ENCODE measurements at regions of chr2 and their contacts with region 1.

Region 1: DNA sequence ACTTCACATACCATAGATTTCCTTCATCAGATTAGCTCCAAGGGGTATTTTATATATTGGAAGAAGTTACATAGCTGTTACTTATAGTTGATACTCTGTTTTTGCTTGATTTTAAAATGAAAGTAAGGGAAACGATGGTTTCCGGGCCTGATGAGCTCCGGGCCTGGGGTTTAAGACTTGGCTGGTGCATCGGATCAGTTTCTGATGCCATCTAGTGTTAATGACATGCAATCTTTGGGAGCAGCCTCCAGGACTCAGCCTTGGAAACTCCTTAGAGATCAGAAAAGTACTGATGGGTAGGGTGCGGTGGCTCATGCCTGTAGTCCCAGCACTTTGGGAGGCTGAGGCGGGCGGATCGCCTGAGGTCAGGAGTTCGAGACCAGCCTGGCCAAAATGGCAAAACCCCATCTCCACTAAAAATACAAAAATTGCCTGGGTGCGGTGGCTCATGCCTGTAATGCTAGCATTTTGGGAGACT is 47.1 kb upstream of the CNOT11 start:
- DNase-seq: peak; percentile 82
- H3K4me3 Mint-ChIP-seq: peak overlapping the region; percentile 72
- H3K27ac Mint-ChIP-seq: peak overlapping the region; percentile 43
- H3K4me1 Mint-ChIP-seq: peaks cover 12% of the 10 kb centered on the region
- H3K27me3 Mint-ChIP-seq: peaks cover 5% of the 10 kb centered on the region

Region 2: DNA sequence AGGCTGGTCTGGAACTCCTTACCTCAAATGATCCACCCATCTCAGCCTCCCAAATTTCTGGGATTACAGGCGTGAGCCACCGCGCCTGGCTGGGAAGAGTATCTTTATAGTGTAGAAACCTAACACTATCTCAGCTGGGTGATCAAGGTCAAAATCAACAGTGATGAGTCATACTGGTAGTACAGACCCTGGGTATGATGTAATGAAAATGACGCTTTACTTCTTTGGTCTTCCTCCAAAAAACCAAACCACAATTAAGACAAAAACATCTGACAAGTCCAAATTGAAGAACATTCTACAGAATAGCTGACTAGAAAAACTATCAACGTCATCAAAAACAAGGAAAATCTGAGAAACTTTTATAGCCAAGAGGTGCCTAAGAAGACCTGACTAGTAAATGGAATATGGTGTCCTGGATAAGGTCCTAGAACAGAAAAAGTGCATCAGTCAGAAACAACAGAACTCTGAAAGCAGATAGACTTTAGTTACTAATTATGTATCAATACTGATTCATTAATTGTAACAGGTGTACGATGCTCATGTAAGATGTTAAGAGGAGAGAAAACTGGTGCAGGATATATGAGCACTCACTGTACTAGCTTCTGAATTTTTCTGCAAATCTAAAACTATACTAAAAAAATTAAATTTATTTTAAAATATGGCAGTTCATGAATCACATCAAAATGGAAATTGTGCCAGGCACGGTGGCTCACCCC is 617.3 kb before region 1 on chr2:
- intact Hi-C with region 1: loop called (anchors 10 kb)
- DNase-seq: peak; percentile 85
- H3K4me3 Mint-ChIP-seq: peak overlapping the region; percentile 32
- H3K27ac Mint-ChIP-seq: peak overlapping the region; percentile 67
- H3K4me1 Mint-ChIP-seq: peaks cover 39% of the 10 kb centered on the region
- H3K27me3 Mint-ChIP-seq: peaks cover 5% of the 10 kb centered on the region

Region 3: DNA sequence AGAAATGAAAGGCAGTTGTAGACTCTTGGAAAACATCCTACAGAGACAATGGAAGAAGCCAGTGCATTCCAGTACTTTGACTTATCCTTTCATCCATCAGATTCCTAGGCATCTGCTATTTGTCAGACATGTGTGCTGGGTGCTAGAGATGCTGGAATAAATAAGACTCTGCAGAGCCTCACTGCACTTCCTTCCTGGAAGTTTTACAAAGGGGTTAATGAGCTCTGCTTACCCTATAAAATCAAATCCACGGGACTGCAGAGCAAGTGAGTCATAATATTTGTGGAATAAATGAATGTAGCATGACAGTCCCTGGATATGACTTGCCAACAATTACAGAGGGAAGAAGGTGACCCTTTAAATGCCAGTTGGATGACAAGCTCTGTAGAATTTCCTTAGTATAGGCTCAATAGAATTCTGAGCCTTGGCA is 438.3 kb before region 1 on chr2:
- intact Hi-C with region 1: no loop called
- DNase-seq: no peak
- H3K4me3 Mint-ChIP-seq: no peak overlapping the region
- H3K27ac Mint-ChIP-seq: no peak overlapping the region
- H3K4me1 Mint-ChIP-seq: no peaks in the 10 kb centered on the region
- H3K27me3 Mint-ChIP-seq: peaks cover 7% of the 10 kb centered on the region

Region 4: GRCh38 chr2:101012706-101013181 is 192.8 kb before region 1 on chr2:
- intact Hi-C with region 1: loop called (anchors 1 kb)
- DNase-seq: peak; percentile 84
- H3K4me3 Mint-ChIP-seq: no peak overlapping the region
- H3K27ac Mint-ChIP-seq: peak overlapping the region; percentile 64
- H3K4me1 Mint-ChIP-seq: peaks cover 22% of the 10 kb centered on the region
- H3K27me3 Mint-ChIP-seq: no peaks in the 10 kb centered on the region

Region 5: GRCh38 chr2:101036562-101037457 is 168.8 kb before region 1 on chr2:
- intact Hi-C with region 1: loop called (anchors 2 kb)
- DNase-seq: no peak
- H3K4me3 Mint-ChIP-seq: no peak overlapping the region
- H3K27ac Mint-ChIP-seq: no peak overlapping the region
- H3K4me1 Mint-ChIP-seq: peaks cover 5% of the 10 kb centered on the region
- H3K27me3 Mint-ChIP-seq: peaks cover 2% of the 10 kb centered on the region